ENCODE measurements at regions of chr18 and their contacts with region 1.

Region 1: DNA sequence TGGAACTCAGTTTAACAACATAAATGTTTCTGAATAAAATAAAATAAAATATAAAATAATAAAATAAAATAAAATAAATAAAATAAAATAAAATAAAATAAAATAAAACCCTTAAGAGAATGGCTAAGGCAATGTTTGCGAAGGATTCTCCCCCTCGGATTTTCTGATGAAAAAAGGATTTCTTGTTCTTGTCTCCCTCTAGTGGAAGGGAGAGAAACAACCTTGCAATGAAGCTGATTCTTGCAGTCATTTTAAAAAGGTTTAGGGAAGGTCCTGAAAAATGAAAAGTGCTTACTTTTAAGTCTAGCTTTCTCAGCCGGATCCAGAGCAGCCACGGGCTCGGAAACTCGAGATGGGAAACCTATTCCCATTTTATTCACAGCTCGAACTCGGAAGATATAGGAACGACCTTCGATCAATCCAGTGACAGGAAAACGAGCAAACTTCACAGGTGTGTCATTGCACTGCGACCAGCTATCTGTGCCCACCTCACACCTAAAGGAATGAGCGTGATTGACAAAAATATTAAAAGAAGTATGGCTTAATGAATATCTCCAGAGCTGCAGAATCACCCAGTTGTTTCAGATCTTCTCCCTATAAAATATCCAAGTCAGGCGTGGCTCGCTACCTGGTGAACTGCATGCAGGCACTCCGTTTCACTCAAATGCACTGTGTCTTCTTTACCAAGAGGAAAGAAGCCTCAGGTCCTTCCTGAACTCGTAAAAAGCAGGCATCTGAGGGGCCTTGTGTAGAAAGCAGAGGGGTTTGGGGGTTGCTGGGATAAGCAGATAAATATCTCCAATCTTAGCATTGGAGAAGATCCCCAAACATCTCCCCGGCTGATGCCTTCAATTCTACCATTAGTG is 68.1 kb downstream of the MYOM1 start:
- DNase-seq: no peak
- ATAC-seq: no peak
- H3K4me3 Mint-ChIP-seq: no peak overlapping the region
- H3K27ac Mint-ChIP-seq: no peak overlapping the region
- H3K4me1 Mint-ChIP-seq: no peaks in the 10 kb centered on the region
- H3K27me3 Mint-ChIP-seq: no peaks in the 10 kb centered on the region

Region 2: DNA sequence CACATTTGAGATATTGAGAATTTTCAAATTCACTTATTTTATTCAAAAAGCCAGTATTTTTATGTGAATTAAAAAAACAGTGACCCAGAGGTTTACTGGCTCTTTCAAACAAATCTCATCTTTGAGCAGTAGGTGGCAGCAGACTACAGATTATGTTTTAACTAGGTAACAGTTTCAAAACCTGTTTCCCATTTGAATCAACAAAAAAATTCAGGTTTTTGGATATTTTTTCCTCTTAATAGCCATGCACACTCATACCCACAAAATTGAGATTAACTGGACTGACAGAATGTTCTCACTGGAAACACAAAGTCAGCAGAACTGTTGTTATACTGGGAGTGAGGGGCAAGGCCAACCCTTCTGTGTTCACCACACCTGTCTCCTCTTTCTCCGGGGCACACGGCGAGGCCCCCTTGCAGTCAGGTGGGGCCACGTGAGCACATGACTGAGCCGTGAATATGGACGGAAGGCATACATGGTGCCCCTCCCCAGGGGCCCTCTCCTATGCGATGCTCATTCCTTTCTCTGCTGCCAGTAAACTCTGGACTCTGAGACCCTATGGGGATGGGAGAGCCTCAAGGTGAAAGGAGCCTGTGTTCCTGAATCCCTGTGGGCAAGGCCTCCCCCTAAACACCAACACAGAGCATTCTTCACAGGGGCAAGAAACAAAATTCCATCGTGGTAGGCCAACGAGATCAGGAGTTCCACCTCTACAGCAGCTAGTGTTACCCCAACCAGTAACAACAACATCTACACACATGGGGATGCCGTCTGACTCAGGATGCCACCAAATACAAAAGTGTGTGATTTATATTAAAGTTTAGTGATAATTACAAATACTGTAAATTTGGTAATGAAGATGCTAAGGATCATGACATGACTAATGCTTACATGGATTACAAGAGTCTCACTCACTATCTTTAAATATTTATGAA is 219.1 kb before region 1 on chr18:
- CTCF ChIA-PET with region 1: interaction called, 19 read pairs
- POLR2A ChIA-PET with region 1: no interaction called
- DNase-seq: peak; percentile 75
- ATAC-seq: peak; percentile 73
- H3K4me3 Mint-ChIP-seq: no peak overlapping the region
- H3K27ac Mint-ChIP-seq: peak overlapping the region; percentile 67
- H3K4me1 Mint-ChIP-seq: peaks cover 26% of the 10 kb centered on the region
- H3K27me3 Mint-ChIP-seq: no peaks in the 10 kb centered on the region

Region 3: GRCh38 chr18:3119401-3120335 is 32.0 kb before region 1 on chr18:
- CTCF ChIA-PET with region 1: no interaction called
- POLR2A ChIA-PET with region 1: no interaction called
- DNase-seq: no peak
- ATAC-seq: no peak
- H3K4me3 Mint-ChIP-seq: no peak overlapping the region
- H3K27ac Mint-ChIP-seq: no peak overlapping the region
- H3K4me1 Mint-ChIP-seq: no peaks in the 10 kb centered on the region
- H3K27me3 Mint-ChIP-seq: peaks cover 2% of the 10 kb centered on the region

Region 4: DNA sequence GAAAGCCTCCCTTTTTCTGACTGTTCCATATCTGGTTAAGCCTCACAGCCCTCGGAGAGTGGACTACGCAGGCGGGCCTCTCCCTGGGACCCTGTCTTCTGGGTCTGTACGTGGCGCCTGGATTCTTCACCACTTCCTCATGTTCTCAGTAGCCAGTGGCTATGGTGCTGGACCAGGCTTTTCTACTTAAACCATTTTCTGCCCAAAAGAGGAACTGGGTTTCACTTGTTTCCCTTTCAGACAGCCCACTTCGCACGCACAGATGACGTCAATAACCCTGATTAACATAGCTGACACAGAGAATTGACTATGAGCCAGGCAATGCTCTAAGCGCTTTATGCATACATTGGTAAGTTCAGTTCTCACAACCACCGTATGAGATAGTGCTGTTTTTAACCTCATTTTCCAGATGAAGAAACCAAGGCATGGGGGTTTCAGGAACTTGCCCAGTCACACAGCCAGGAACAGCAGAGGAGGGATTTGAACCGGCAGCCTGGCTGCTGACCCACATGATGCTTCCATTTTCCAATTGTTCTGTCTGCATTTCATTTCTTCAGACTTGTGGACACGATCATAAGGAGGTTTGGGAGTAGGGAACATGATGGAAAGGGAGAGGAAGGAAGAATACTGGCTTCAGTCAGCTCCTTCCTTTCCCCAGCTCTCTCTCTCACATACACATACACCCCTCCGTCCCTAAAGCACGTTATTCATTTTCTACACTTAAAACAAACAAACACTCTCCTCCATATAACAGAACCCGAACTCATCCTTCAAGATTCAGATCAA is 26.5 kb after region 1 on chr18:
- CTCF ChIA-PET with region 1: interaction called, 10 read pairs
- POLR2A ChIA-PET with region 1: no interaction called
- DNase-seq: peak; percentile 23
- ATAC-seq: no peak
- H3K4me3 Mint-ChIP-seq: no peak overlapping the region
- H3K27ac Mint-ChIP-seq: no peak overlapping the region
- H3K4me1 Mint-ChIP-seq: no peaks in the 10 kb centered on the region
- H3K27me3 Mint-ChIP-seq: no peaks in the 10 kb centered on the region

Region 5: DNA sequence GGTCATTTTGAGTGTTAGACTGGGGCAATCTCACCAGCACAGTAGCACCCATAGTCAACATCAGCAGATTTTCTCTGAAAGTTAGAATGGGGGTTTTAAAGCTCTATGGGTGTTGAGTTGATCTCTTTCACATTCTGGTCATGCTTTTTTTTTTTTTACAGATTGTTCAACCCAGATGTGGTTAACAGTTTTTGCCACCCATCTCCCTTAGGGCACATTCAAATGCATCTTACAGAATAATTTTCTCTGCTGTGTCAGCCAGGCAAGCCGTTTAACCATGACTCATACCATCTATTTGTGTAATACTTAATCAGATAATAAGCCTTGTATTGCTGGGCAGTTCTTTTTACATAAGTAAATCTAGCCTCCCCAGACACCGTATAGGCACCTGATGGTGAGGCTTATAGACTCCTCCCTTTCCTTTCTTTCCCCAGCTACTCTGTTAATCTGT is 360.3 kb after region 1 on chr18:
- CTCF ChIA-PET with region 1: no interaction called
- POLR2A ChIA-PET with region 1: no interaction called
- DNase-seq: no peak
- ATAC-seq: peak; percentile 60
- H3K4me3 Mint-ChIP-seq: no peak overlapping the region
- H3K27ac Mint-ChIP-seq: no peak overlapping the region
- H3K4me1 Mint-ChIP-seq: peaks cover 10% of the 10 kb centered on the region
- H3K27me3 Mint-ChIP-seq: peaks cover 2% of the 10 kb centered on the region